A549 (cell line): ENCODE measurements at regions of chr9 and their contacts with region 1.

Region 1: GRCh38 chr9:95167998-95168397 is 149.5 kb downstream of the FANCC start:
- DNase-seq: peak; percentile 28 to 76
- ATAC-seq: peak; percentile 66 to 78; a peak in 4 of 6 replicates
- H3K4me3 ChIP-seq: no peak overlapping the region
- H3K27ac ChIP-seq: no peak overlapping the region
- H3K4me1 ChIP-seq: peaks cover 14% of the 10 kb centered on the region; the same call in 1 of the 3 replicates
- CTCF ChIP-seq: peak; percentile 59
- EP300 ChIP-seq: no peak
- POLR2A ChIP-seq: no peak
- RAD21 ChIP-seq: peak; percentile 50 to 63; a peak in 3 of 5 replicates

Region 2: DNA sequence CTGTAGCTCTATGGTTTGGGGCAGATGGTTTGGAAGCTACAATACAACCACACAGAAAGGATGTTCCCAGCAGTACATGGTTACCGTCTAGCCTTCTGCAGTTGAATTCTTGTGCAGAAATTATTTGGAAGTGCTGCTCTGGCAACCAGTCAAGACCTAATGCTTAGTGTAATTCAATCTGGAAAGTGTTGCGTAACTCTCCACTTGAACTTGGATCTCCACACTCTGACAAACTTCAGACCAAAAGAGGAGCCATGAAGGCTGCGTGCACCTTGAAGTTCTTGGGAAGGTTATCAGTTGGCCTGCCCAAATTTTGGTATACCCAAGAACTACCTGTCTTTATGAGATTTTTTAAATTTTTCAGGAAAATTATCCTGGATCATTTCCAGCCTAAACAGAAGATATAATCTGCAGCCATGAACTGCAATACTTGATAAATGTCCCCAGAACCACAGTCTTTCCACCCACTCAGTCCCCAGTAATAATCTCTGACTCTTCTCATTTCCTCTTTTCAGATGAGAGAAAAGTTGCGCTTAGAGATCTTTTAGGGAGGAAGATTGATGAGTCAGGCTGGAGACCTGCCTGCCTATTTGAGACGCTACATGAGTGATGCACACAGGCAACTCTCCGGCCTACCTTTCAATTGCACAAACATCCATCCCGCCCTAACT is 10.4 kb before region 1 on chr9:
- CTCF ChIA-PET with region 1: interaction called, 10 read pairs
- POLR2A ChIA-PET with region 1: no interaction called
- DNase-seq: peak in 1 of 2 experiments; percentile 21
- ATAC-seq: no peak
- H3K4me3 ChIP-seq: no peak overlapping the region
- H3K27ac ChIP-seq: no peak overlapping the region
- H3K4me1 ChIP-seq: peaks cover 4% of the 10 kb centered on the region; the same call in 1 of the 3 replicates
- CTCF ChIP-seq: no peak
- EP300 ChIP-seq: no peak
- POLR2A ChIP-seq: no peak
- RAD21 ChIP-seq: no peak

Region 3: DNA sequence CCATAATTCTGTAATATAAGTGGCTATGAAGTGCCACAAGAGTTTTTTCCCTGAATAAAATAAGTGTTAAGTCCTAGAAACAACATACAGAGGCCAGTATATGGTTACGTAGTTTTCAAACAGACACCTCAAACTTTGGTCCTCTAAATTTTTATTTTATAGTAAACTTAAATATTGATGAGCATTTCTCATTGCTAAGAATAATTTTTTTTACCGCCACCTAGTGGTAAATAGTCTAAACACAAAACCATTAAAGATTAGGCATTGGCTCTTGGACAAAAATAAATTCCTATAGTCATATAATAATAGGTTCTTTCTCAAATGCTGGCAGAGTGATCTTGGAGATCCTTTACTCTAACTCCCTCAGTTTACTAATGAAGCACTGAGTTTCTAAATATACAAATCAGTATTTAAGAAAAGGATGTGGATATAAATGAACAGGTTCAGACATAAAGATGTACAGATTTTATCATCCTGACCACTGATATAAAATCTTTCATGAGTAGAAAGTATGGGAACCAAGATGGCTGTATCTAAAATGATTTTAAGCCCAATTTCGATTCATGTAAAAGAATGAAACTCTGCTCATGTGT is 13.3 kb after region 1 on chr9:
- CTCF ChIA-PET with region 1: interaction called, 16 read pairs
- POLR2A ChIA-PET with region 1: interaction called, 3 read pairs
- DNase-seq: peak in 1 of 2 experiments; percentile 34
- ATAC-seq: no peak
- H3K4me3 ChIP-seq: no peak overlapping the region
- H3K27ac ChIP-seq: no peak overlapping the region
- H3K4me1 ChIP-seq: no peaks in the 10 kb centered on the region
- CTCF ChIP-seq: peak; percentile 57
- EP300 ChIP-seq: no peak
- POLR2A ChIP-seq: no peak
- RAD21 ChIP-seq: no peak; a peak in 1 of 5 replicates